Mammary epithelial cell (primary cell): ENCODE measurements at regions of chr1 and their contacts with region 1.

Region 1: DNA sequence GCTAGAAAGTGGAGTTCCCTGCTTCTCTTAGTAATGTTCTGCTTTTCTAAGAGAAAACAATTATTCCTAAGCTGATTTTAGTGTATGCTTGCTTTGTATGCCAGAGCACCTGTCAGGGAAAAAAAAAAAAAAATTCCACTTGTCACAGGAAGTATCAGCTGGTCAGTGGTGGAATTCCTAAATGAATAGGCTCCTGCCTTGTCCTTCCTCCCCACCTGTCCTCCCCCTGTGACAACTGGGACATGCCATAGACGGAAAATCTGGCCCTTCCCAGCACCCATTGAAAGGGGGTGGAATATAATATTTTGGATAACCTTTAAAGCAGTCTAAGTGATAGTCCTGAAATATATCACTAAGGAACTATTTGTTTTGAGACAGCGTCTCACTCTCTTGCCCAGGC is 10.8 kb downstream of the FNDC5 start:
- DNase-seq: no peak
- H3K4me3 ChIP-seq: no peak overlapping the region
- H3K27ac ChIP-seq: no peak overlapping the region
- H3K4me1 ChIP-seq: peaks cover 20% of the 10 kb centered on the region
- H3K27me3 ChIP-seq: no peaks in the 10 kb centered on the region
- CTCF ChIP-seq: no peak

Region 2: DNA sequence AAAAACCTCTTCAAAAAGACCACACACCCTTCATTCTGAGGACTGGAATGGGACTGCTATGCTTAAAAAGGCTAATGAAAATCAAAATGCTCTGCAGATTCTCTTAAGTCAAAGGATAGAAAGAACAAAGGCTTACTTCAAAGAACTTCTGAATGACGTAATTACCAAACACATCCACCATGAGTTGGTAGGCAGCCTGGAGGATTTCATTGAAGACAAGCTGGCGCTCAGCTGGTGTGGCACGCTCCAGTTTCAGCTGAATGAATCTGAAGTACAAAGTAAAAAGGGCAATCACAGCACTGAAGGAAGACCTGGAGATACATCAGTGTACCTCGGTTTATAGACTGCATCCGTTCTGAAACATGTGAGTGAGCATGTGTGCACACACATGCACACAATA is 1907.8 kb before region 1 on chr1:
- CTCF ChIA-PET with region 1: no interaction called
- dilution Hi-C with region 1: no loop called
- in situ Hi-C with region 1: no loop called
- intact Hi-C with region 1: no loop called
- DNase-seq: no peak
- H3K4me3 ChIP-seq: no peak overlapping the region
- H3K27ac ChIP-seq: no peak overlapping the region
- H3K4me1 ChIP-seq: no peaks in the 10 kb centered on the region
- H3K27me3 ChIP-seq: no peaks in the 10 kb centered on the region
- CTCF ChIP-seq: no peak

Region 3: GRCh38 chr1:32540605-32541004 is 319.3 kb before region 1 on chr1:
- CTCF ChIA-PET with region 1: no interaction called
- dilution Hi-C with region 1: no loop called
- in situ Hi-C with region 1: no loop called
- intact Hi-C with region 1: no loop called
- DNase-seq: peak; percentile 3
- H3K4me3 ChIP-seq: peak overlapping the region; percentile 49 to 74 (median 54)
- H3K27ac ChIP-seq: no peak overlapping the region
- H3K4me1 ChIP-seq: peaks cover 10% of the 10 kb centered on the region
- H3K27me3 ChIP-seq: no peaks in the 10 kb centered on the region
- CTCF ChIP-seq: no peak

Region 4: GRCh38 chr1:32806910-32807523 is 52.9 kb before region 1 on chr1:
- CTCF ChIA-PET with region 1: no interaction called
- dilution Hi-C with region 1: loop called (anchors 5 kb)
- in situ Hi-C with region 1: no loop called
- intact Hi-C with region 1: no loop called
- DNase-seq: no peak
- H3K4me3 ChIP-seq: no peak overlapping the region
- H3K27ac ChIP-seq: no peak overlapping the region
- H3K4me1 ChIP-seq: no peaks in the 10 kb centered on the region
- H3K27me3 ChIP-seq: no peaks in the 10 kb centered on the region
- CTCF ChIP-seq: no peak